PC-9 (cell line): ENCODE measurements at regions of chr4 and their contacts with region 1.

Region 1: DNA sequence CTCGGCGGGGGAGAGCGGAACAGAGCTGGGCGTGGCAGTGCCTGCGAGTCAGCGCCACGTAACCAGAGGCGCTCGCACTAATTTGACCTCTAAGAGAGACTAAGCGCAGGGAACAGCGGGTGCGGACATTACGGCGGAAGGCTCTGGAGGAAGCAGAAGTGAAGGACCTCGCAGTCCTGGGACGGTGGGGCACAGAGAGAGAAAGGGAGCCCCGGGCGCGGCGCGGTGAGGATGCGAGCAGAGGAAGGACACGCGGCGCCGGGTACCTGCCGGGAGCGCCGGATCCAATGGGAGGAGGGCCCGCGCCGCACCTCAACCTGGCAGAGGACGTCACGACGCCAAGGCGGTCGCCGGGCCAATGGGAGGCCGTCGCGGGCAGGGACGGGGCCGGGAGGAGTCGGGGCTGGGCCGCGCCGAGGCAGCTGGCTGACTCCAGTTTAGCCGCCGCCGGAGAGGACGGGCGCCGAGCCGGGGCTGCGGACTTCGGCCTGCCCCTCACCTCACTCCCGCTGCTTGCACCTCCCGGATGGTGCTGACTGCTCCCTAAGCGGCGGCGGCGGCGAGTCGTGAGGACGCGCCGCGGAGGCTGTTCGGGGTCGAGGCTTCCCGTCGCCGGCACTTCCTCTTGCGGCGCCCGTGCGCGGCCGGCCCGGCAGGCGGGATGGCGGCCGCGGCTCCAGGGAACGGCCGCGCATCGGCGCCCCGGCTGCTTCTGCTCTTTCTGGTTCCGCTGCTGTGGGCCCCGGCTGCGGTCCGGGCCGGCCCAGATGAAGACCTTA is at the start of gene TMEM165:
- DNase-seq: peak; percentile 67 to 89
- H3K4me3 ChIP-seq: peak within 1 kb of the TSS; percentile 67
- H3K27ac ChIP-seq: peak within 1 kb of the TSS; percentile 66
- H3K4me1 ChIP-seq: peaks cover 47% of the 10 kb centered on the region
- H3K27me3 ChIP-seq: no peaks in the 10 kb centered on the region
- CTCF ChIP-seq: no peak
- total RNA-seq, gene TMEM165: 61.4 and 61.8 TPM in 2 replicates

Region 2: GRCh38 chr4:55012363-55013230 is 383.1 kb before region 1 on chr4:
- CTCF ChIA-PET with region 1: no interaction called
- POLR2A ChIA-PET with region 1: no interaction called
- intact Hi-C with region 1: loop called (anchors 5 kb)
- DNase-seq: no peak
- H3K4me3 ChIP-seq: no peak overlapping the region
- H3K27ac ChIP-seq: no peak overlapping the region
- H3K4me1 ChIP-seq: peaks cover 9% of the 10 kb centered on the region
- H3K27me3 ChIP-seq: no peaks in the 10 kb centered on the region
- CTCF ChIP-seq: no peak

Region 3: DNA sequence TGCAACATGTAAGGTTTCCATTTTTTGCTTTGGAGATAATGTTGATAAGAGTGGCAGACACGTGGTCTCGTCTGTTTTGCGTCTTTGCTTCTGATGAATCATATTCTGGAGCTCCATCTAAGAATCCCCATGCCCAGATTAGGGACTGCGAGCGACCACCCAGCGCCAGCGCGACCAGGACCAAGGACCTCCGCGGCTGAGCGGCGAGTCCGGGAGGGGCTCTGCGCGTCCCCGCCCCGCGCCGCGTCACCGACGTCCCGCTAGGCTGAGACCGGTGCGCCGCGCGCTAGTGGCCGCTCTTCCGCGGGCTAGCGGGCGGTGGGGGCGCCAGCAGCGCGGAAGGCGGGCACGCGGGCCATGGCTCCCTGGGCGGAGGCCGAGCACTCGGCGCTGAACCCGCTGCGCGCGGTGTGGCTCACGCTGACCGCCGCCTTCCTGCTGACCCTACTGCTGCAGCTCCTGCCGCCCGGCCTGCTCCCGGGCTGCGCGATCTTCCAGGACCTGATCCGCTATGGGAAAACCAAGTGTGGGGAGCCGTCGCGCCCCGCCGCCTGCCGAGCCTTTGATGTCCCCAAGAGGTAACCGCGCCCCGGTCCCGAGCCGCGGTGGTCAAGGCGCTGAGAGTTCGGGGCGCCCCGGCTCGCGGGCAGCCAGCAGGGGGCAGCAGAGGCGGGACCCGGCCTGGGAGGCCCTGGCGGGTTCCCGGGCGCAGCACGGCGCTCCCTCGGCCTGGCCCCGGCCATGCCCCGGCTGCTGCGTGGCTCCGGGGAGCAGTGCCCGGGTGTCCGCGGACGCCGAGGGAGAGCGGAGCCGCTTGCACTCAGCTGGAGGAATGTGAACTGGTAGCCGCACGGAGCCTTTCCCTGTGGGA is 49.5 kb before region 1 on chr4 and contains the start of gene SRD5A3:
- CTCF ChIA-PET with region 1: interaction called, 5 read pairs
- POLR2A ChIA-PET with region 1: no interaction called
- intact Hi-C with region 1: loop called (anchors 1 kb)
- DNase-seq: peak; percentile 52 to 86
- H3K4me3 ChIP-seq: peak within 1 kb of the TSS; percentile 64
- H3K27ac ChIP-seq: peak within 1 kb of the TSS; percentile 58
- H3K4me1 ChIP-seq: peaks cover 27% of the 10 kb centered on the region
- H3K27me3 ChIP-seq: no peaks in the 10 kb centered on the region
- CTCF ChIP-seq: peak; percentile 76
- total RNA-seq, gene SRD5A3: 7.3 and 9.9 TPM in 2 replicates

Region 4: DNA sequence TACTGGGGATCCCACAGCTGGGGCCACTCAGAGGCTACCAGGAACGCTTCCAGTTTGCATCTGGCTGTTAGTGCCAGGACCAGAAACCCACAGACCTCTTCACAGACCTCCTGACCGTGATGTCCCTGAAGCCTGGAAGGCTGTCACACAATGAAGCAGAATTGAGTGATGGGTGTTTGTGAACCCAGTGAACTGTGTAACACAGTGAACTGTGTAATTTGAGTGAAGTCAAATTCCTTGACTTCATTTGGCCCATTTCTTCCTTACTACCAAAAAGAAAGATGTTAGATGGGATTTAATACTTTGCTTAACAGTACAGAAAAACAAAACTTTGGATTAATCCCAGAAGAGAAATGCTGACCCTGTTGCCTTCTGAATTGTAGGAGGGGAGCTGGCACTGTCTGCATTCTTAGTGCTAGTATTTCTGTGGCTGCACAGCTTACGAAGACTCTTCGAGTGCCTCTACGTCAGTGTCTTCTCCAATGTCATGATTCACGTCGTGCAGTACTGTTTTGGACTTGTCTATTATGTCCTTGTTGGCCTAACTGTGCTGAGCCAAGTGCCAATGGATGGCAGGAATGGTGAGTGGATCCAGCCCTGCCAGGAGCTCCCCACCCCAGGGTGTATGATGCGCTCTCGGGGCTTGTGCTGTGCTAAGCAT is 31.9 kb before region 1 on chr4:
- CTCF ChIA-PET with region 1: no interaction called
- POLR2A ChIA-PET with region 1: interaction called, 5 read pairs
- intact Hi-C with region 1: loop called (anchors 5 kb)
- DNase-seq: no peak
- H3K4me3 ChIP-seq: no peak overlapping the region
- H3K27ac ChIP-seq: no peak overlapping the region
- H3K4me1 ChIP-seq: peaks cover 26% of the 10 kb centered on the region
- H3K27me3 ChIP-seq: no peaks in the 10 kb centered on the region
- CTCF ChIP-seq: no peak

Region 5: GRCh38 chr4:55378617-55379463 is 16.9 kb before region 1 on chr4:
- CTCF ChIA-PET with region 1: no interaction called
- POLR2A ChIA-PET with region 1: interaction called, 18 read pairs
- intact Hi-C with region 1: no loop called
- DNase-seq: peak; percentile 61 to 92
- H3K4me3 ChIP-seq: peak overlapping the region; percentile 45; the same call in 1 of the 2 replicates
- H3K27ac ChIP-seq: peak overlapping the region; percentile 85
- H3K4me1 ChIP-seq: peaks cover 18% of the 10 kb centered on the region
- H3K27me3 ChIP-seq: no peaks in the 10 kb centered on the region
- CTCF ChIP-seq: no peak

Region 6: DNA sequence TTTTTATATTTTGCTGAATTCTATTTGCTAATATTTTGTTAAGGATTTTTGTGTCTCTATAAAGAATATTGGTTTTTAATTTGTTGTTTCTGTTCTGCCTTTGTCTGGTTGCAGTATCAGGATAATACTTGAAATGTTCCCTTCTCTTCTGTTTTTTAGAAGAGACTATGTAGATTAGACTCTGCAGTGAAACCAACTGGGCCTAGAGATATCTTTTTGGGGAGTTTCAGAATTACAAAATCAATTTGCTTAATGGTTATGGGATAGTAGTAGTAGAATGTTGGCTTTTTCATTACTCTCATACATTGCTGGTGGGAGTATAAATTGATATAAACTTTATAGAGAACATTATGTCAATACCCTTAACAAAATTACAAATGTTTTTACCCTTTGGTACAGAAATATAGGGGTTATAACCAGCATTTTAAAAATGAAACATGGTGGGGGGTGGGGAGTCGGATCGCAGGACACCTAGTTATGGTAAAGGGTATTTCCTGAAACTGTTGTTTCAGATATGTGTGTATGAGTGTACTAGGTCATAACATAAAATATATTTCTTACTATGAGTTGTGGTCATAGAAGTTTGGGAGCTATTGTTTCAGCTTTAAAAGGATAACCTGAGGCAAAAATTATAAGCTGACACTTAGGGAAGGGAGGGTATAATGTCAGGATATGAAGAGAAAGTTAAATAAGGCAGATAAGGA is 122.0 kb after region 1 on chr4:
- CTCF ChIA-PET with region 1: no interaction called
- POLR2A ChIA-PET with region 1: no interaction called
- intact Hi-C with region 1: no loop called
- DNase-seq: no peak
- H3K4me3 ChIP-seq: no peak overlapping the region
- H3K27ac ChIP-seq: no peak overlapping the region
- H3K4me1 ChIP-seq: no peaks in the 10 kb centered on the region
- H3K27me3 ChIP-seq: no peaks in the 10 kb centered on the region
- CTCF ChIP-seq: no peak

Region 7: GRCh38 chr4:55742655-55743202 is 347.0 kb after region 1 on chr4:
- CTCF ChIA-PET with region 1: no interaction called
- POLR2A ChIA-PET with region 1: no interaction called
- intact Hi-C with region 1: no loop called
- DNase-seq: no peak
- H3K4me3 ChIP-seq: no peak overlapping the region
- H3K27ac ChIP-seq: no peak overlapping the region
- H3K4me1 ChIP-seq: no peaks in the 10 kb centered on the region
- H3K27me3 ChIP-seq: no peaks in the 10 kb centered on the region
- CTCF ChIP-seq: no peak